PC-9 (cell line): ENCODE measurements at regions of chrX and their contacts with region 1.

Region 1: DNA sequence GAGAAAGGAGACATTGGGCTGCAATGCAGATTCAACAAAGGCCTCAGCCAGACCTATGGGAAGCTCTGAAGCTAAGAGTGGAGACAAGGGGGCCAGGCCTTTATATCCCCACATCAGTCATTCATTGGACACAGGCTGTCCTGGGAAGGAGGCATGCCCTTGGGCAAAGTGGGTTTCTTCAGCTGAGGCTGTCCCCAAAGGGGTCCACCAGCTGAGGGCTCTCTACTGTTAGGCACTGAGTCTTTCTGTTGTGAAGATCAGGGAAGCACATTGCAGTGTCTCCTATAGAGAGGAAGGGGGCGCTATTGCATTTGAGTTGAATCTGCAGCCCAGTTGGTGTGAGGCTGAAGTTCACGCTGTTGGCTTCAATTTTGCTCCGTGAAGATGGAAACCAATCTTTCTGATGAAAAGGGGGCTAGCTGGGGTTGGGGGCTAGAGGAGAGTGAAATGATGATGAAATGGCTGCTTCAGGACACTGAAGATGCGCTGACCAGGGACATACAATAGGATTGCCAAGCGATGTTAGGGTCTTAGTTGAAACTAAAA is 48.0 kb downstream of the SLC25A5 start:
- DNase-seq: peak; percentile 36 to 57
- H3K4me3 ChIP-seq: no peak overlapping the region
- H3K27ac ChIP-seq: no peak overlapping the region
- H3K4me1 ChIP-seq: peaks cover 5% of the 10 kb centered on the region; the same call in 1 of the 2 replicates
- H3K27me3 ChIP-seq: no peaks in the 10 kb centered on the region
- CTCF ChIP-seq: peak; percentile 95

Region 2: GRCh38 chrX:118847676-118848075 is 668.6 kb before region 1 on chrX:
- CTCF ChIA-PET with region 1: no interaction called
- POLR2A ChIA-PET with region 1: no interaction called
- intact Hi-C with region 1: loop called (anchors 10 kb)
- DNase-seq: peak in 1 of 2 experiments; percentile 59
- H3K4me3 ChIP-seq: no peak overlapping the region
- H3K27ac ChIP-seq: no peak overlapping the region
- H3K4me1 ChIP-seq: no peaks in the 10 kb centered on the region
- H3K27me3 ChIP-seq: no peaks in the 10 kb centered on the region
- CTCF ChIP-seq: peak; percentile 85

Region 3: DNA sequence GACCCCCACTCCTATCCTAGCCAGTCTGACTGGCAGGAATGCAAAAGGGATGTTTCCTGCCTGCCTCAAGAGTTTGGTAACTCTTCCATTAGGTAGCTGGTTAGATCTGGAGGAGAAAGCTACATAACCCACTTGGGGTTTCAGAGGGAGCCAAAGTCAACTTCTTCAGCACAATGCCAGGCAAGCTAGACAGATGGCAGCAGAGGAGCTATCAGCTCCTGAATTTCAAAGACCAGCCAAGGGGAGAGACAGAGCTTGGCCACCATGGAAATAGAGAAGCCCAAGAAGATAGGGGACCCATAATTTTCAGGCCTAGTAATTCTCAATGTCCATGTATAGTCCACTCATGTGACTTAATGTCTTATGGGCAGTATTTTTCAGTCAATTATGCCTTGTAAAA is 223.8 kb before region 1 on chrX:
- CTCF ChIA-PET with region 1: no interaction called
- POLR2A ChIA-PET with region 1: no interaction called
- intact Hi-C with region 1: loop called (anchors 2 kb)
- DNase-seq: no peak
- H3K4me3 ChIP-seq: no peak overlapping the region
- H3K27ac ChIP-seq: no peak overlapping the region
- H3K4me1 ChIP-seq: no peaks in the 10 kb centered on the region
- H3K27me3 ChIP-seq: no peaks in the 10 kb centered on the region
- CTCF ChIP-seq: peak; percentile 56

Region 4: GRCh38 chrX:119482481-119483480 is 33.4 kb before region 1 on chrX:
- CTCF ChIA-PET with region 1: interaction called, 12 read pairs
- POLR2A ChIA-PET with region 1: no interaction called
- intact Hi-C with region 1: no loop called
- DNase-seq: peak; percentile 70 to 78
- H3K4me3 ChIP-seq: peak overlapping the region; percentile 57; the same call in 1 of the 2 replicates
- H3K27ac ChIP-seq: 0 out of 2 replicates have a peak overlapping the region, but pooled peaks have one; percentile 37
- H3K4me1 ChIP-seq: peaks cover 16% of the 10 kb centered on the region
- H3K27me3 ChIP-seq: no peaks in the 10 kb centered on the region
- CTCF ChIP-seq: peak; percentile 81

Region 5: GRCh38 chrX:119502727-119503483 is 13.3 kb before region 1 on chrX:
- CTCF ChIA-PET with region 1: interaction called, 10 read pairs
- POLR2A ChIA-PET with region 1: interaction called, 12 read pairs
- intact Hi-C with region 1: no loop called
- DNase-seq: peak; percentile 78 to 86
- H3K4me3 ChIP-seq: peak overlapping the region; percentile 43; the same call in 1 of the 2 replicates
- H3K27ac ChIP-seq: peak overlapping the region; percentile 95
- H3K4me1 ChIP-seq: peaks cover 49% of the 10 kb centered on the region
- H3K27me3 ChIP-seq: no peaks in the 10 kb centered on the region
- CTCF ChIP-seq: no peak; the same call in 1 of the 2 replicates

Region 6: DNA sequence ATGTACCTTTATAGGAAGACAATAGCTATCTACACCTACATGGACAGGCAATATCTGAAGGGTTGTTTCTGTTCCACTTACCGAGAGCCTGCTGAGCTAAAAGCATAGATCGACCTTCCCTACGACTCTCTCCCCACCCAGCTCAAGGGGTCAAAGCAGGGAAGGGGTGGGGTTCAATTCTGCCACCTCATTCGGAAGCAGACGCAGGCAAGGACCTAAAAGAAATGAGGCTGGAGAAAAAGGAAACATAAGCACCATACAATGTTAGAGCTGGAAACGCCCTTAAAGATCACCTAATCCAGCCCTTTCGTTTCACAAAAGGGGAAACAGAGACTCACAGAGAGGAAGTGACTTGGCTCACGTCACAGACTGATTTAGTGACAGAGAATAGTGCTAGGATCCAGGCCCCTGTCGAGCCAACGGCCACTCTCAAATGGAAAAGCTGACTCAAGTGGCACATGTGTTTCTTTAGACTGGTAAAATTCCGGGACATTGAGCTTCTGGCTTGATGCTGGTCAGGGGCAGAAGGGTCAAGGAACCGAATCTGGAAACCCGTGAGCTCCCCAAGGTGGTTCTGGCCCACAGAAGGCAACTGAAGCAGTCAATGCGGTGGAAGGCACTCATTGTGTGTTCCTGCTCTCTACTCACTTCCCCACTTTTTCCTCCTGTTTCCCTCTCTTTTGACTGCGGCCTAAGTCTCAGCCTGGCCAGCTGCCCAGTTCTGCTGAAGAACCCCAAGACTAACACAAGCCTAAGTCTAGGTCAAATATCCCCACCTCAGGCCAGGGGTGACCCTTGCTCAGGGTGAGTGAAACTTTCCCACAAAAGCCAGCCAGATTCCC is 169.2 kb after region 1 on chrX:
- CTCF ChIA-PET with region 1: no interaction called
- POLR2A ChIA-PET with region 1: no interaction called
- intact Hi-C with region 1: no loop called
- DNase-seq: no peak
- H3K4me3 ChIP-seq: no peak overlapping the region
- H3K27ac ChIP-seq: no peak overlapping the region
- H3K4me1 ChIP-seq: no peaks in the 10 kb centered on the region
- H3K27me3 ChIP-seq: no peaks in the 10 kb centered on the region
- CTCF ChIP-seq: no peak

Region 7: DNA sequence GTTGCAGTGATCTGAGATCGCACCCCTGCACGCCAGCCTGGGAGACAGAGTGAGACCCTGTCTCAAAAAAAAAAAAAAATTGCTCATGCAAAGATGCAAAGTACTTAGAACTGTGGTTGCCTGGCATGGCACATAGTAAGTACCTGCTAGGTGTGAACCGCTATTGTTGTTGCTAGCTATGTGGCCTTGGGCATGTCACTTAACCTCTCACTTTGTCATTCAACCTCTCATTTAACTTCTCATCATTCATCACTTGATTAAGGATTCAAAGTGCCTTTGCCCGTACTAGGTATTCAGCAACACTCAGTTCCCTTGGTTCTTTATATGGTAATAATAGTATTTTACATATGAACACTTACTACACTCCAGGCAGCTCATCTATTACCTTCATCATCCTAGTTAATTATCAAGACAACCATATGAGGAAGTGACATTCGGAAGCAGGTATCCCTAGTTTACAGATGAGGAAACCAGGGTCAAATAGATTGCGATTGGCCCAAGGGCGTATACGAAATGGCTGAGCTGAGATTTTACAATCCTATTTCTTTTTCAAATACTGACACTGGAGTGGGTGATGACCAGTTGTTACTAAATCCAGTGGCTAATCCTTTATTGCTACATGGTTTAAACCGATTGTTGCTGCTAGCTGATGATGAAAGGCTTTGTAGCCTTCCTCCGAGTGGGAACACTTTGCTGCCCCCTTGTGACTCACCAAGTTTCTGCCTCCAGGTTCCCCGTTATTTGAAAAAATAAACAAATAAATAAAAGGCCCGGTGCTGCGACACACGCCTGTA is 213.4 kb after region 1 on chrX:
- CTCF ChIA-PET with region 1: no interaction called
- POLR2A ChIA-PET with region 1: no interaction called
- intact Hi-C with region 1: loop called (anchors 1 kb)
- DNase-seq: peak; percentile 57 to 63
- H3K4me3 ChIP-seq: no peak overlapping the region
- H3K27ac ChIP-seq: no peak overlapping the region
- H3K4me1 ChIP-seq: no peaks in the 10 kb centered on the region
- H3K27me3 ChIP-seq: no peaks in the 10 kb centered on the region
- CTCF ChIP-seq: peak; percentile 78

Region 8: GRCh38 chrX:119887721-119888425 is 371.6 kb after region 1 on chrX:
- CTCF ChIA-PET with region 1: no interaction called
- POLR2A ChIA-PET with region 1: no interaction called
- intact Hi-C with region 1: loop called (anchors 5 kb)
- DNase-seq: peak; percentile 65 to 77
- H3K4me3 ChIP-seq: peak overlapping the region; percentile 66
- H3K27ac ChIP-seq: no peak overlapping the region
- H3K4me1 ChIP-seq: no peaks in the 10 kb centered on the region
- H3K27me3 ChIP-seq: no peaks in the 10 kb centered on the region
- CTCF ChIP-seq: peak; percentile 83